Colonic mucosa (tissue), 4 donors: ENCODE measurements at regions of chr1 and their contacts with region 1.

Region 1: DNA sequence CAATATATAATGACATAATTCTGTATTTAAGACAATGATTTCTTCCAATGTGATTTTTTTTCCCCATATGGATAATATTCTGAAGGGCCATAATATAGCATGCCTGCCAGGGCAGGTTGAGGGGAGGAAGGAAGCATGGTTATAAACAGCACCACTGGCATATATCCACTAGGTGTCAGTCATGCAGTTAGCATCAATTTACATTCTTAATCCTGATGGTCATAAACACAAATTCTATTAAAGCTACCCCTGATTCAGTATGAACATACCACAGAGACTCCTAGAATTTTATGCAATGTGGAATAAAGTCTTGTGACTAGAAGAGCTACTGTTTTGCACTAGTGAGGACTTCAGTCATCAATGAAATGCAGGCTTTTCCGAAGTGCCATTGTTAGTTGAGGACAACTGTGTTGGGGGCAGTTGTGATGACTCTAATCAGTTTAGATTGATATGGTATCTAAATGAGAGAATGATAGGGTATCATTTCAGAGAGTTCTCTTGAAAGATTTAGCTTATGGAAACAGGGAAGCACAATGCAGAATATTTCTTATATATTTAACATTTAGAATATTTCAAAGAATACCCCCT is 342.7 kb upstream of the NR5A2 start:
- DNase-seq: peak; percentile 36
- H3K4me3 ChIP-seq: no peak overlapping the region
- H3K27ac ChIP-seq: no peak overlapping the region
- H3K4me1 ChIP-seq: no peaks in the 10 kb centered on the region
- H3K27me3 ChIP-seq: no peaks in the 10 kb centered on the region
- CTCF ChIP-seq: peak; percentile 74

Region 2: GRCh38 chr1:200302192-200302920 is 617.6 kb after region 1 on chr1:
- intact Hi-C with region 1: loop called (anchors 10 kb)
- DNase-seq: peak; percentile 37
- H3K4me3 ChIP-seq: peak overlapping the region; percentile 63
- H3K27ac ChIP-seq: no peak overlapping the region
- H3K4me1 ChIP-seq: no peaks in the 10 kb centered on the region
- H3K27me3 ChIP-seq: no peaks in the 10 kb centered on the region
- CTCF ChIP-seq: no peak

Region 3: GRCh38 chr1:200506471-200506870 is 821.7 kb after region 1 on chr1:
- intact Hi-C with region 1: loop called (anchors 5 kb)
- DNase-seq: no peak
- H3K4me3 ChIP-seq: no peak overlapping the region
- H3K27ac ChIP-seq: no peak overlapping the region
- H3K4me1 ChIP-seq: no peaks in the 10 kb centered on the region
- H3K27me3 ChIP-seq: no peaks in the 10 kb centered on the region
- CTCF ChIP-seq: no peak